Heart left ventricle (tissue), 16 donors: ENCODE measurements at regions of chr7 and their contacts with region 1.

Region 1: DNA sequence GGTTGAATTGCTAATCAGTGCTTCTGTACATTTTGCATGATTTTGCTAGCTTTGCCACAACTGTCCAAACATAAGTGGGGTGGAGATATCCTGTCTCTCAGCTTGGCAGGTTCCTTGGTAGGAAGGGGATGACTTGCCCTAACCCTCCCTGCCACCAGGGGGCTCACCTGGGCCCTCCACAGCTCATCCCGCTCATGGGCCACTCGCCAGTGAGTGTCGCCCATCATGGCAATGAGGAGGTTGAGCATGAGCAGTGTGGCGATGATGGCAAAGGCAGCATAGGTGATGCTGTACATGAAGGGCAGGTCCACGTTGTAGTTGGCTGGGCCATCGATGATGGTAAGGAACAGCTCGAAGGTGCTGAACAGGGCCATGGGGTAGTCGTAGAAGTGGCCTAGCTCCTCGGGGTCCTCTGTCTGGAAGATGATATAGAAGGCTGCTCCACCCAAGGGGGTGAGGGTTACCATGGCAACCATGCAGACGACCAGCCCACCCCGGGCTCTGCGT is 12.2 kb downstream of the TRPV6 start:
- DNase-seq: no peak
- ATAC-seq: no peak
- H3K4me3 ChIP-seq: no peak overlapping the region
- H3K27ac ChIP-seq: no peak overlapping the region
- H3K4me1 ChIP-seq: no peaks in the 10 kb centered on the region
- H3K27me3 ChIP-seq: peaks cover 0 to 20% (median 0%) of the 10 kb centered on the region in 9 donors
- CTCF ChIP-seq: peak in 7 of 12 donors; percentile 7 to 52 (median 21)
- POLR2A ChIP-seq: no peak

Region 2: DNA sequence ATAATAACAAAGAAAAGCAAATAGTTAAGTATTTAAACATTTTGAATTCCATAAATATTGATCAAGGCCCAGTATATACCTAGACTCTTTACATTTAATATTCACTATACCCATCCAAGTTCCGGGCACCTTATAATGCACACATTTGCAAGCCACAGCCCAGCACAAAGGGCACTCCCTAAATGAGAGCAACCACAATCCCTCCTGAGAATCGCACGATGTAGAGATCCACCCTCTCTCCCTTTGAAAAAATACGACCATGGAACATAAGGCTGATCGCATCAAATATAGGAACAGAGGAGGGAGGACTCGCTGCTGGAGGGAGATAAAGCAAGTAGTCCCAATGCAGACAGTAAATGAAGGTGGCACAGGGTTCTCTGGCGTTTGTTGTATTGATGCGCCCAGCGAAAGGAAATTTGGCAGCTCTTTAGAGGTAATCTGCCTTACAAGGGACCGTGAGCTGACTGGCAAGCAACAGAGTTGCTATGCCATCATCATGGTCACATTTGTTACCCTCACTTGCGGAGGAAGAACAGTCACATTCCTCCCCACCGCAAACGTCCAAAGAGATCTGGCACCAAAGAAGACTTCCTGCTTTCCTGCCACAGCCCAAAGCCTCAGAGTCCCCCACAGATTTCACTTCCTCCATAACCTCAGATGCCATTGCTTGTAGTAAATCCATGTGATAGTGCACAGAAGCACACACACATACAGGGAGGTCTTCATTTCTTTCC is 332.4 kb after region 1 on chr7:
- intact Hi-C with region 1: loop called in 1 of 10 experiments (anchors 10 kb)
- DNase-seq: peak in 4 of 5 donors; percentile 30 to 32 (median 31)
- ATAC-seq: peak; percentile 41 to 77 (median 59)
- H3K4me3 ChIP-seq: peak overlapping the region in 1 of 12 donors; percentile 25
- H3K27ac ChIP-seq: no peak overlapping the region
- H3K4me1 ChIP-seq: peaks cover 0 to 23% (median 0%) of the 10 kb centered on the region in 12 donors
- H3K27me3 ChIP-seq: no peaks in the 10 kb centered on the region
- CTCF ChIP-seq: no peak
- POLR2A ChIP-seq: no peak

Region 3: DNA sequence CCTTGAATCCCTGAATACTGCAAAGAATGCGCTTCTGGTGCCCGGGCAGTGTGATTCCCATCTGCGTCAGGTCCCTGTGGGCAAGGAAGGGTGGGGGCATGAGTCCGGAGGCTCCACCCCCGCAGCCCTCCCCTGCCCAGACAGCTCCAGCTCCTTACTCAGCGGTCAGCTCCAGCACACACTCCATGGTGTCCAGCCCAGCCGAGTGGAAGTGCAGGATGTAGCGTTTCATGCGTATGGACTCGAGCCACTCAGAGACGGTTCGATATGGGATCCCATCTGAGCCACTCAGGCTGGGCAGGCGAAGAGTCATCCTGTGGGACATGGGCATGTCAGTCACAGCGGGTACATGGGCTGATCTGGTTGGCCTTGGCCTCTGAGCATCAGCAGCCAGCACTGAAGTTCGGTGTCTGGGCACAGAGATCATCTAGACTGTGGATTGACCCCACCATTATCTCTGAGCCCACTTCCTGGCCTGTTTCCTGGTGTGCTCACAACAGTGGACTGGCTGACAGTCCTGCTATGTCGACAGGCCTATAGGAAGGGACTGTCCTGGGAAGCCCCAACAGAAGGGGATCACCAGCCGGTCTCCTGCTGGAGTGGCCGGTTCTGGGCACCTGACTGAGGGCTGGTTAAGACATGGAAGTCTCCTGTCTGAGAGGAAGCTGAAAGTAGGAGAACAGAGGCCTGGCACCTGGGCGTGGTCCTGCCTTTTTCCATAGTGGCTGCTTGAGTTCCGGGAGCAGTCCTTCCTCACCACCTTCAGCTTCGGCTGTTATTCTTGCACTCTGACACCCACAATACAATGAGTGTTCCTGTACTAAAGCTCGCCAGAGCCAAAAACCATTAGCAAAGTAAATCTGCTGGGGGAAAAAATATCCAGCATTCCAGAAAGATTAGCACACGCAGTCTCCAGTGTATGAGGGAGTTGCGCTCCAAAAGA is 518.4 kb after region 1 on chr7:
- intact Hi-C with region 1: no loop called
- DNase-seq: peak; percentile 64 to 81 (median 77)
- ATAC-seq: peak; percentile 42 to 83 (median 74)
- H3K4me3 ChIP-seq: peak overlapping the region in 4 of 12 donors; percentile 2 to 25 (median 18)
- H3K27ac ChIP-seq: peak overlapping the region; percentile 68 to 99 (median 84)
- H3K4me1 ChIP-seq: peaks cover 2 to 91% (median 50%) of the 10 kb centered on the region in 12 donors
- H3K27me3 ChIP-seq: no peaks in the 10 kb centered on the region
- CTCF ChIP-seq: no peak
- POLR2A ChIP-seq: peak in 1 of 2 donors; percentile 20